ENCODE measurements at regions of chr9 and their contacts with region 1.

Region 1: DNA sequence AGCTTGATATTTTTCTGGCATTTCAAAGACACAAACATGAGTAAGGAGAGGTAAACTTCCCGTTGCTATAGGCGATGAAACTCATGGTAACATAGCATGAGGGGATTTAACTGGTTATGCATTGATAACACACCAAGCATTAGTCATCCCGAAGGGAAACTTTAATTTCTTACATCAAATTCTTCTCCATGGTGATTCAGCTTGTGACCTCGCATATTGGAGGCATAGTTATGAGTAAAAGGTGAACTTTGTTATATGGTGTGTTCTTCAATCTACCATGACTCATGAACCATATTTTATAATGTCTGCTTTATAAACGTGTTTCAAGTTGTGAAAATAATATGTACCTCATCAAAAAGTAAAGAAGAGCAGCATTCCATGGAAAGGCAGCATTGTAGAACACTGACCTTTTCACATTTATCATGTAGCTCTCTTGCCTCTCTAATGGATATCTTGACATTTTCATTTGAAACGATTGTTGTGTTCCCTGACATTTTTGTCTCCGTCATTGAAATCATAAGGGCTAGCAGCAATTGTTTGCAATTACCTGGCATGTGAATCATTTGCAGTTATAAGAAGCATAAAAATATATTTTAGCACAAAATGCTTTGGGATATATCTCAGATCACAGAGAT is 491.8 kb downstream of the ANXA1 start:
- DNase-seq: peak in 1 of 2 experiments; percentile 66
- H3K4me3 ChIP-seq: no peak overlapping the region
- H3K27ac ChIP-seq: peak overlapping the region; percentile 36; the same call in 1 of the 2 replicates
- H3K4me1 ChIP-seq: peaks cover 14% of the 10 kb centered on the region; the same call in 1 of the 2 replicates
- H3K27me3 ChIP-seq: no peaks in the 10 kb centered on the region
- CTCF ChIP-seq: no peak

Region 2: DNA sequence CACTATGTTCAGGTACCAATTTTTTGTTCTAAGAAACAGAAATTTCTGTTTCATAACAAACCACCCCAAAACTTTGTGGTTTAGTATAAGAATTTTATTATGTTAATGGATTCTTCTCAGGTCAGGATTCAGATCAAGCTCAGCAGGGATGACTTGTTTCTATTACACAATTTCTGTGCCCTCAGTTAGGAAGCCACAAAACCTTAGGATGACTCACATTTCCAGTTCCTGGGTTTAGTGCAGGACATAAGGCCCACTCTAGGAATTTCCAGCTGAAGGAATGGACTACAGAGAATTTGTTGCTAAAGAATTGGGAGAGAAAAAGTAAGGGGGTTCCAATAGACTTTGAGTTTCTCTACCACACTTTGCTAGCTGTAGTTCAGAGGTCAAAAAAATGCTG is 137.4 kb after region 1 on chr9:
- CTCF ChIA-PET with region 1: no interaction called
- POLR2A ChIA-PET with region 1: no interaction called
- intact Hi-C with region 1: no loop called
- DNase-seq: peak in 1 of 2 experiments; percentile 51
- H3K4me3 ChIP-seq: no peak overlapping the region
- H3K27ac ChIP-seq: no peak overlapping the region
- H3K4me1 ChIP-seq: 0 out of 2 replicates have a peak, but pooled peaks cover 4% of the 10 kb centered on the region
- H3K27me3 ChIP-seq: no peaks in the 10 kb centered on the region
- CTCF ChIP-seq: no peak

Region 3: DNA sequence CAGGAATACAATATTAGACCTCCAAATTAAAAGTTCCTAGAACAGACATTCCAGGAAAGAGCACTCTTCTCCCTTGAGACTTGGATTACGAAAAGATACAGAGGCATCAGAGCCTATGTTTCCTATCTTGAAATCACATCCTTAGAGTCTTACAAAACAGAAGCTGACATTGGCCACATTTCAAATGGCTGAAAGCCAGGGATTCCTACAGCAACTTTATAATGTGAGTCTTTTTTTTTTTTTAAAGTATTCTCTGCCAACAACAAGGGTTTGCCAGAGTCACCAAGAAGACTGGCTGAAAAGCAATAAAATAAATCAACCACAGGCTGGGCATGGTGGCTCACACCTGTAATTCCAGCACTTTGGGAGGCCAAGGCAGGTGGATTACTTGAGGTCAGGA is 1181.2 kb after region 1 on chr9:
- CTCF ChIA-PET with region 1: no interaction called
- POLR2A ChIA-PET with region 1: interaction called, 19 read pairs
- intact Hi-C with region 1: no loop called
- DNase-seq: peak; percentile 48 to 63
- H3K4me3 ChIP-seq: no peak overlapping the region
- H3K27ac ChIP-seq: no peak overlapping the region
- H3K4me1 ChIP-seq: no peaks in the 10 kb centered on the region
- H3K27me3 ChIP-seq: no peaks in the 10 kb centered on the region
- CTCF ChIP-seq: no peak

Measured in PC-9 (cell line).